CD14-positive monocyte (primary cell): ENCODE measurements at regions of chr6 and their contacts with region 1.

Region 1: GRCh38 chr6:32483968-32484636 is 44.4 kb downstream of the HLA-DRA start:
- DNase-seq: no peak
- H3K4me3 ChIP-seq: no peak overlapping the region
- H3K4me3 Mint-ChIP-seq: no peak overlapping the region
- H3K27ac ChIP-seq: no peak overlapping the region
- H3K27ac Mint-ChIP-seq: no peak overlapping the region
- H3K4me1 ChIP-seq: peaks cover 0 to 10% of the 10 kb centered on the region in 2 donors
- H3K4me1 Mint-ChIP-seq: peaks cover 9% of the 10 kb centered on the region
- H3K27me3 ChIP-seq: no peaks in the 10 kb centered on the region
- H3K27me3 Mint-ChIP-seq: no peaks in the 10 kb centered on the region
- CTCF ChIP-seq: no peak

Region 2: DNA sequence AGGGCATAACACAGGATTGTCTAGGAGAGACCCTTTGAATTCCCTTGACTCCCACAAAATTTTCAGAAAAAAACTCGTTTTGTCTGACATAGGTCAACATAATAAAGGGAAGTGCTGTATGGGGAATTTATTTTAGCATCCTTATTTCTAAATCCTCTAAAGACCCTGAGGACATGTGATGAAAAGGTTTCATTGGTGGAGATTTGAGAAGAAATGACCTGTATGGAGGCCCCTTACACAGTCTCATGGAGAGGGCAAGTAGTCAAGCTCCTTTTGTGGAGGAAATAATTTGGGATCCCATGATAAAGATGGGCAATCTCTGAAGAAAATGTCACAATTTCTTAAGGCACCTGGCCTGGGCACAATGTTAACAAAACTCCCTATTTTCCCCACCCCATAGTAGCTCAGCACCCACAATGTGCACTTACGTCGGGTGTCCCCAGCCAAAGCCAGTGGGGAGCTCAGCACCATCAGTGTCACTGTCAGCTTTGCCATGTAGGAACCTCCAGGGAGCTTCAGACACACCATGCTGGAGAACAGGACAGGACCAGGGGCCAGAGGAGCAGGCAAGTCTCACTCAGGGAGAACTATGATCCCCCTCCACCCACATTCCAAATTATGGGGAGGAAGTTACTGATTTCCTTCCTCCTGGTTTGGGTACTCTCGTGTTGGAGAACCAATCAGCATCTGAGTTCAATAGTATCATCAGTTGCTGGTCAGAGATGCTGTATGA is 45.8 kb after region 1 on chr6 and contains the start of gene HLA-DRB5:
- intact Hi-C with region 1: loop called in 1 of 2 experiments (anchors 10 kb)
- DNase-seq: peak; percentile 71 to 84 (median 74)
- H3K4me3 ChIP-seq: peak within 1 kb of the TSS; percentile 50 to 76 (median 51)
- H3K4me3 Mint-ChIP-seq: peak within 1 kb of the TSS; percentile 89 to 95
- H3K27ac ChIP-seq: peak within 1 kb of the TSS; percentile 81 to 92
- H3K27ac Mint-ChIP-seq: peak within 1 kb of the TSS; percentile 94 to 99 (median 98)
- H3K4me1 ChIP-seq: peaks cover 9 to 11% of the 10 kb centered on the region in 2 donors
- H3K4me1 Mint-ChIP-seq: peaks cover 20% of the 10 kb centered on the region
- H3K27me3 ChIP-seq: no peaks in the 10 kb centered on the region
- H3K27me3 Mint-ChIP-seq: no peaks in the 10 kb centered on the region
- CTCF ChIP-seq: no peak
- polyA plus RNA-seq, gene HLA-DRB5: 168 to 1,407 (median 394) TPM

Region 3: GRCh38 chr6:32576250-32576649 is 92.1 kb after region 1 on chr6:
- intact Hi-C with region 1: loop called in 1 of 2 experiments (anchors 10 kb)
- DNase-seq: no peak
- H3K4me3 ChIP-seq: no peak overlapping the region
- H3K4me3 Mint-ChIP-seq: no peak overlapping the region
- H3K27ac ChIP-seq: no peak overlapping the region
- H3K27ac Mint-ChIP-seq: no peak overlapping the region
- H3K4me1 ChIP-seq: no peaks in the 10 kb centered on the region
- H3K4me1 Mint-ChIP-seq: peaks cover 1% of the 10 kb centered on the region
- H3K27me3 ChIP-seq: no peaks in the 10 kb centered on the region
- H3K27me3 Mint-ChIP-seq: no peaks in the 10 kb centered on the region
- CTCF ChIP-seq: no peak

Region 4: DNA sequence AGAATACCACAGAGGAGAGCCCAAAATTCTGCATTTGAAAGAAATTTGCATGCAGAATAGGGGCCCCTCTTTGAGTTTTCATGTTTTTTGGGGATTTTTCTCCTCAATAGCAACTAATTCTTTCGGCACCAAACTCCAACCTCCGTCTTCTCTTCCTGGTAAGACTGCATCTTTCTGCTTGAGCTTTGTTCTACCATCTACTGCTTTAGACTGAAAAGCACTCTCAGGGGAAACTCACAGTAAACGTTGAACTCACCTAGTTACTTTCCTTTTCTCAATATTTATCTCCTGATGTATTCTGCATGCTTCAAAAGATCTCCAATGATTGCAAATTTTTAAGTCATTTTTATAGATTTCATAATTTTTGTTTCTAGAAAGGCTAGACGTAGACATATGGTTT is 219.2 kb after region 1 on chr6:
- intact Hi-C with region 1: no loop called
- DNase-seq: no peak
- H3K4me3 ChIP-seq: no peak overlapping the region
- H3K4me3 Mint-ChIP-seq: no peak overlapping the region
- H3K27ac ChIP-seq: no peak overlapping the region
- H3K27ac Mint-ChIP-seq: no peak overlapping the region
- H3K4me1 ChIP-seq: peaks cover 4 to 7% of the 10 kb centered on the region in 2 donors
- H3K4me1 Mint-ChIP-seq: peaks cover 7% of the 10 kb centered on the region
- H3K27me3 ChIP-seq: peaks cover 8 to 20% of the 10 kb centered on the region in 2 donors
- H3K27me3 Mint-ChIP-seq: peaks cover 8 to 30% (median 22%) of the 10 kb centered on the region in 3 donors
- CTCF ChIP-seq: no peak